ENCODE measurements at regions of chr11 and their contacts with region 1.

Region 1: GRCh38 chr11:95790123-95790932 is at the start of gene CEP57:
- DNase-seq: peak; percentile 95 to 97 (median 96)
- ATAC-seq: peak; percentile 88 to 96 (median 93)
- H3K4me3 ChIP-seq: peak within 1 kb of the TSS; percentile 55 to 95 (median 83)
- H3K27ac ChIP-seq: peak within 1 kb of the TSS; percentile 93 to 99 (median 99)
- H3K4me1 ChIP-seq: peaks cover 3 to 31% (median 23%) of the 10 kb centered on the region in 12 donors
- H3K27me3 ChIP-seq: no peaks in the 10 kb centered on the region
- CTCF ChIP-seq: no peak
- POLR2A ChIP-seq: peak in 1 of 2 donors; percentile 47
- total RNA-seq, gene CEP57: 17.2 to 31.7 (median 24.3) TPM

Region 2: DNA sequence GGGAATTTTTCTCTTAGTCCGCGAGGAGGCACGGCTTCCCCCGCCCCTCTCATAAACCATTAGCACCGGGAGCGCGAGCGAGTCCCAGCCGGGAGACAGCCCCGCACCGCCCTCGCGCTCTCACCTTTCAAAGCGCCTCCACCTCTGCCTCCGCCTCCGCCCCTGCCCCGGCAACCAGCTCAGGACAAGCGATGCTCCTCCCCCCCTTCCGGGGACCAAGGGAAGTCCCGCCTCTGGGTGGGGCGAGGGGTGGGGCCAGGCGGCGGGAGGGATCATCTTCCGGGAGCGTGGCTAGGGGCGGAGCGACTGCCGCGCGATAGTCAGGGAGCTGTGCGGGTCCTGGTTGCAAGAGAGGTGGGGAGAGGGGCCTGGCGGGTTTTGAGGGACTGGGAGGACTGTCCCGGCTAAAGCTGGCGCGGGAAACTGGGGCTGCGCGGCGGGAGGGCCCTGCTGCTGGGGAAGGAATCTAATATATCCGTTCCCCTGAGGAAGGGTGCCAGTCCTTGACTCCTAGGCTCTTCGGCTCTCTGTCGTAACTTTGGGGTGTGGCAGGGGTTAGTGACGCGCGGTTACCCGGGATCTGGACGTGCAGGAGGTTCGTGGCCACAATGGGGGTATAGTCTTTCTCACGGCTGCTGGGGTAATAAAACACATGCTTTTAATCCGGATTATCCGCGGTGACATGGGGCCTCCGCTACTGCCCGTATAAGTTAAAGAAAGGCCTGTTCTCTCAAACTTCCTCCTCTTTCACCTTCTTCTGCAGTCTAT is 599.6 kb after region 1 on chr11 and contains the starts of genes CCDC82 and JRKL:
- intact Hi-C with region 1: loop called in 1 of 10 experiments (anchors 2 kb)
- DNase-seq: peak; percentile 96 to 98 (median 97)
- ATAC-seq: peak; percentile 99 to 100 (median 100)
- H3K4me3 ChIP-seq: peak within 1 kb of the TSS; percentile 71 to 94 (median 84)
- H3K27ac ChIP-seq: peak within 1 kb of the TSS; percentile 54 to 92 (median 87)
- H3K4me1 ChIP-seq: peaks cover 0 to 32% (median 20%) of the 10 kb centered on the region in 12 donors
- H3K27me3 ChIP-seq: no peaks in the 10 kb centered on the region
- CTCF ChIP-seq: peak in 1 of 12 donors; percentile 3
- POLR2A ChIP-seq: peak; percentile 5 to 83
- total RNA-seq, gene CCDC82: 5.4 to 16.4 (median 14.5) TPM
- total RNA-seq, gene JRKL: 2.6 to 8.3 (median 5.5) TPM

Measured in heart left ventricle (tissue), 16 donors.